ENCODE measurements at regions of chr12 and their contacts with region 1.

Region 1: GRCh38 chr12:50167041-50167828 is at the start of gene CERS5:
- DNase-seq: peak; percentile 97
- ATAC-seq: peak; percentile 98
- H3K4me3 ChIP-seq: peak within 1 kb of the TSS; percentile 70 to 99 (median 74)
- H3K4me3 Mint-ChIP-seq: peak within 1 kb of the TSS; percentile 95
- H3K27ac ChIP-seq: peak within 1 kb of the TSS; percentile 83 to 90
- H3K27ac Mint-ChIP-seq: peak within 1 kb of the TSS; percentile 95
- H3K4me1 ChIP-seq: peaks cover 17 to 19% of the 10 kb centered on the region in 2 donors
- H3K4me1 Mint-ChIP-seq: peaks cover 25% of the 10 kb centered on the region
- H3K27me3 ChIP-seq: no peaks in the 10 kb centered on the region
- H3K27me3 Mint-ChIP-seq: no peaks in the 10 kb centered on the region
- CTCF ChIP-seq: no peak
- total RNA-seq, gene CERS5: 70.9 and 72.0 TPM in 2 replicates

Region 2: DNA sequence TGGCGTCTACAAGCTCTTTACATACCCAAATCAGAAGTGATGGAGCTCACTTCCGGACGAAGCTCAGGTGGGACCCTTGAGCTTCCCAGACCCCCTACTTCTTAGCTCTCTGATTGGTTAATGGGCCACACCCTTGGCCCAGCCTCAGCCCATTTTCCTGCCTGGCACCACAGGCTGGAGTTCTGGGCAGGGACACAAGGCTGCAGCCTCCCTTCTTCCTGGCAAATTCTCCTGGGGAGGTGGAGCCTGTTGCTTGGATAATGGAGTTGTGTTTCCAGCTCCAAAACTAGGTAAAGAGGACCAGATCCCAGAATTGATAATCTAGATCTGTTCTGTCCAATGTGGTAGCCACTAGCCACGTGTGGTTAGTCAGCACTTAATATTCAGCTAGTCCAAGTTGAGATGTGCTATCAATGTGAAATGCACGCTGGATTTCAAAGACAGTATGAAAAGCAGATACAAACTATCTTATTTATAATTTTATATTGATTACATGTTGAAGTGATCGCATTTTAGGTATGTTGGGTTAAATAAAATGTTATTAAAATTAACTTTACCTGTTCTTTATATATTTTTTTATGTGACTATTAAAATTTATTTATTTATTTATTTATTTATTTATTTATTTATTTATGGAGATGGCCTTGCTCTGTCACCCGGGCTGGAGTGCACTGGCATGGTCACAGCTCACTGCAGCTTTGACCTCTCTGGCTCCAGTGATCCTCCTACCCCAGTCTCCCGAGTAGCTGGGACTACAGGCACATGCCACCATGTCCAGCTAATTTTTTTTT is 250.9 kb before region 1 on chr12:
- CTCF ChIA-PET with region 1: interaction called, 10 read pairs
- POLR2A ChIA-PET with region 1: no interaction called
- intact Hi-C with region 1: no loop called
- DNase-seq: no peak
- ATAC-seq: no peak
- H3K4me3 ChIP-seq: no peak overlapping the region
- H3K4me3 Mint-ChIP-seq: no peak overlapping the region
- H3K27ac ChIP-seq: no peak overlapping the region
- H3K27ac Mint-ChIP-seq: no peak overlapping the region
- H3K4me1 ChIP-seq: no peaks in the 10 kb centered on the region
- H3K4me1 Mint-ChIP-seq: no peaks in the 10 kb centered on the region
- H3K27me3 ChIP-seq: peaks cover 0 to 4% (median 0%) of the 10 kb centered on the region in 4 experiments
- H3K27me3 Mint-ChIP-seq: peaks cover 16% of the 10 kb centered on the region
- CTCF ChIP-seq: no peak

Region 3: GRCh38 chr12:50283229-50283923 is 116.1 kb after region 1 on chr12 and contains the start of gene LIMA1:
- CTCF ChIA-PET with region 1: no interaction called
- POLR2A ChIA-PET with region 1: no interaction called
- intact Hi-C with region 1: loop called (anchors 2 kb)
- DNase-seq: peak; percentile 93
- ATAC-seq: peak; percentile 98
- H3K4me3 ChIP-seq: peak within 1 kb of the TSS; percentile 61 to 86 (median 80)
- H3K4me3 Mint-ChIP-seq: peak within 1 kb of the TSS; percentile 95
- H3K27ac ChIP-seq: peak within 1 kb of the TSS; percentile 19 to 74
- H3K27ac Mint-ChIP-seq: peak within 1 kb of the TSS; percentile 83
- H3K4me1 ChIP-seq: peaks cover 11 to 18% of the 10 kb centered on the region in 2 donors
- H3K4me1 Mint-ChIP-seq: peaks cover 13% of the 10 kb centered on the region
- H3K27me3 ChIP-seq: peaks cover 0 to 8% (median 0%) of the 10 kb centered on the region in 4 experiments
- H3K27me3 Mint-ChIP-seq: peaks cover 4% of the 10 kb centered on the region
- CTCF ChIP-seq: peak; percentile 47
- total RNA-seq, gene LIMA1: 2.1 and 2.9 TPM in 2 replicates

Region 4: GRCh38 chr12:50400598-50401364 is 233.5 kb after region 1 on chr12 and contains the start of gene LARP4:
- CTCF ChIA-PET with region 1: no interaction called
- POLR2A ChIA-PET with region 1: no interaction called
- intact Hi-C with region 1: loop called (anchors 1 kb)
- DNase-seq: peak; percentile 93
- ATAC-seq: peak; percentile 94
- H3K4me3 ChIP-seq: peak within 1 kb of the TSS; percentile 53 to 90 (median 81)
- H3K4me3 Mint-ChIP-seq: peak within 1 kb of the TSS; percentile 92
- H3K27ac ChIP-seq: peak within 1 kb of the TSS; percentile 62 to 88
- H3K27ac Mint-ChIP-seq: peak within 1 kb of the TSS; percentile 93
- H3K4me1 ChIP-seq: peaks cover 22 to 24% of the 10 kb centered on the region in 2 donors
- H3K4me1 Mint-ChIP-seq: peaks cover 38% of the 10 kb centered on the region
- H3K27me3 ChIP-seq: no peaks in the 10 kb centered on the region
- H3K27me3 Mint-ChIP-seq: peaks cover 9% of the 10 kb centered on the region
- CTCF ChIP-seq: no peak
- total RNA-seq, gene LARP4: 42.0 and 48.4 TPM in 2 replicates